Esophagus muscularis mucosa (tissue), 4 donors: ENCODE measurements at regions of chr5 and their contacts with region 1.

Region 1: DNA sequence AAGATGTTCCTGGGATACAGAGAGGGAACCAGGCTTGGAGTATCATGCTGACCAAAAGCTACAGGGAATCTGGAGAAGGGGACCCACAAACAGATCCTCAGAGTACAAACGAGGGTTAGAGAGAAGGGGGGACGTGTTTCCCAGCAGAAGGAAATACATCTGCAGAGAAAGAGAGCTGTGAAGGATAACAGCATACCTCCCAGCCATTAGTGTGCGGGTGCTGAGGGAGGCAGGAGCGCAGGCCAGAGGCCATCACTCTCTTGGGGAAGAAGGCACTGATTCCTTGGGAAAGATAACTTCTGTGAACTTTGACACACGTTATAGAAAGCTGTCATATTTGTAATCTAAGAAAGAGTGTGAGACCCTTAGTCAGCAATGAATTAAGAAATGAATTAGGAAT is 96.9 kb downstream of the KCNN2 start:
- DNase-seq: no peak
- H3K4me3 ChIP-seq: no peak overlapping the region
- H3K27ac ChIP-seq: no peak overlapping the region
- H3K4me1 ChIP-seq: no peaks in the 10 kb centered on the region
- H3K27me3 ChIP-seq: no peaks in the 10 kb centered on the region
- CTCF ChIP-seq: no peak
- EP300 ChIP-seq: no peak
- POLR2A ChIP-seq: no peak

Region 2: GRCh38 chr5:114361724-114362196 is 97.0 kb before region 1 on chr5 and contains the start of gene KCNN2:
- intact Hi-C with region 1: loop called (anchors 5 kb)
- DNase-seq: no peak
- H3K4me3 ChIP-seq: peak within 1 kb of the TSS; percentile 69 to 77 (median 74)
- H3K27ac ChIP-seq: peak within 1 kb of the TSS; percentile 59 to 80 (median 72)
- H3K4me1 ChIP-seq: peaks cover 11 to 40% (median 38%) of the 10 kb centered on the region in 4 donors
- H3K27me3 ChIP-seq: peaks cover 0 to 32% (median 3%) of the 10 kb centered on the region in 4 donors
- CTCF ChIP-seq: no peak
- EP300 ChIP-seq: no peak
- POLR2A ChIP-seq: no peak
- total RNA-seq, gene KCNN2: 6.5 to 10.2 (median 8.6) TPM